Heart right ventricle (tissue), 16 donors: ENCODE measurements at regions of chr3 and their contacts with region 1.

Region 1: GRCh38 chr3:99499235-99500158 is 138.9 kb upstream of the COL8A1 start:
- DNase-seq: peak in 1 of 2 donors; percentile 44
- ATAC-seq: peak; percentile 44 to 78 (median 66)
- H3K4me3 ChIP-seq: no peak overlapping the region
- H3K27ac ChIP-seq: peak overlapping the region in 4 of 10 donors; percentile 15 to 60 (median 33)
- H3K4me1 ChIP-seq: peaks cover 4 to 45% (median 36%) of the 10 kb centered on the region in 9 donors
- H3K27me3 ChIP-seq: no peaks in the 10 kb centered on the region
- CTCF ChIP-seq: peak; percentile 51 to 84 (median 77)

Region 2: DNA sequence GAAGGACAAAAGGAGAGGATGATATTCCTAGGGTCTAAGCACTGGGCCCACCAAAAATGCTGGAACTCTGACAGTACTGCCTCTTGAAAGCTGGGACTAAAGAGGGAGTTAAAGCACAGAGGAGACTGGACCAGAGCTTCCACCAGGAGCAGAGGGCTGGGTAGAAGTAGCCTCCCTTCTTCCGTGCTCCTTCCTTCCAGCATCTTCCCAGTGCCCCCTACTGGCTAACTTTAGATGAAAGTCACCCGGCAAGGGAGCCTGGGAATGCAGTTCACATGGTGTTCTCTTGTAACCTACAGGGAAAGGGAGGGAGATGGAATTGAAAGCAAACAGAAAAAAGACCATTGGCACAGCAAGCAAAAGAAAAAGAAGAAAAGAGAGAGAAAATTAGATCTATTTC is 32.7 kb after region 1 on chr3:
- intact Hi-C with region 1: loop called in 1 of 10 experiments (anchors 1 kb)
- DNase-seq: peak in 1 of 2 donors; percentile 23
- ATAC-seq: peak in 5 of 8 donors; percentile 67 to 77 (median 71)
- H3K4me3 ChIP-seq: no peak overlapping the region
- H3K27ac ChIP-seq: no peak overlapping the region
- H3K4me1 ChIP-seq: peaks cover 0 to 6% (median 0%) of the 10 kb centered on the region in 9 donors
- H3K27me3 ChIP-seq: peaks cover 0 to 3% (median 0%) of the 10 kb centered on the region in 7 donors
- CTCF ChIP-seq: peak in 8 of 9 donors; percentile 42 to 66 (median 54)

Region 3: GRCh38 chr3:99551520-99551919 is 52.0 kb after region 1 on chr3:
- intact Hi-C with region 1: loop called in 2 of 10 experiments (anchors 5 kb)
- DNase-seq: no peak
- ATAC-seq: peak in 6 of 8 donors; percentile 14 to 71 (median 66)
- H3K4me3 ChIP-seq: no peak overlapping the region
- H3K27ac ChIP-seq: peak overlapping the region in 6 of 10 donors; percentile 10 to 77 (median 56)
- H3K4me1 ChIP-seq: peaks cover 0 to 43% (median 16%) of the 10 kb centered on the region in 9 donors
- H3K27me3 ChIP-seq: no peaks in the 10 kb centered on the region
- CTCF ChIP-seq: peak in 1 of 9 donors; percentile 17

Region 4: DNA sequence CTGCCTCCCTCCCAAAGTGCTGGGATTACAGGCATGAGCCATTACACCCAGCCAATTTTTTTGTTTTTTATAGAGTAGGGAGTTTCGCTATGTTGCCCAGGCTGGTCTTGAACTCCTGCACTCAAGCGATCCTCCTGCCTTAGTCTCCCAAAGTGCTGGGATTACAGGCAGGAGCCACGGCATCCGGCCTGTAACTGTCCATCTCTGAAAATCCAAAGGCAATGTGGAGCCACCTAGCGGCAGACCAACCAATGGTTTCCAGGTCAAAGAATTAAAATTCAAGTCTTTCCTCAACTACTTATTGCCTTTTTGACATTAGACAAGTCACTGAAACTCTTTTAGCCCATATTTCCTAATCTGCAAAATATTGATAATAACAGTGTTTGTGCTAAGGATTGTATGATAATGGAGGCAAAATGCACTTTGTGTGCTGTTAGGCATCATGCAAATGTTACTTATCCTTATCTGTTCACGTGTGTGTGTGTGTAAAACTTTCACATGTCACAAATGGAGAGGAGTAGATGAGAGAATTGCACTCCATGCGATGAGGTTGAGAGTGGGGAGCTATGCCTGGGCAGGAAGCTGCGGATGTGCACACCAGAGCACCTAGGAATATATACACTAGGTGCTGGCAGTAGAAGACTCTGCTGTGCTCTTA is 187.6 kb after region 1 on chr3:
- intact Hi-C with region 1: loop called in 7 of 10 experiments (anchors 2 to 10 kb)
- DNase-seq: peak; percentile 43 to 55
- ATAC-seq: peak in 3 of 8 donors; percentile 46 to 54 (median 48)
- H3K4me3 ChIP-seq: no peak overlapping the region
- H3K27ac ChIP-seq: peak overlapping the region in 1 of 10 donors; percentile 23
- H3K4me1 ChIP-seq: peaks cover 0 to 26% (median 0%) of the 10 kb centered on the region in 9 donors
- H3K27me3 ChIP-seq: peaks cover 0 to 3% (median 0%) of the 10 kb centered on the region in 7 donors
- CTCF ChIP-seq: peak; percentile 43 to 76 (median 67)

Region 5: DNA sequence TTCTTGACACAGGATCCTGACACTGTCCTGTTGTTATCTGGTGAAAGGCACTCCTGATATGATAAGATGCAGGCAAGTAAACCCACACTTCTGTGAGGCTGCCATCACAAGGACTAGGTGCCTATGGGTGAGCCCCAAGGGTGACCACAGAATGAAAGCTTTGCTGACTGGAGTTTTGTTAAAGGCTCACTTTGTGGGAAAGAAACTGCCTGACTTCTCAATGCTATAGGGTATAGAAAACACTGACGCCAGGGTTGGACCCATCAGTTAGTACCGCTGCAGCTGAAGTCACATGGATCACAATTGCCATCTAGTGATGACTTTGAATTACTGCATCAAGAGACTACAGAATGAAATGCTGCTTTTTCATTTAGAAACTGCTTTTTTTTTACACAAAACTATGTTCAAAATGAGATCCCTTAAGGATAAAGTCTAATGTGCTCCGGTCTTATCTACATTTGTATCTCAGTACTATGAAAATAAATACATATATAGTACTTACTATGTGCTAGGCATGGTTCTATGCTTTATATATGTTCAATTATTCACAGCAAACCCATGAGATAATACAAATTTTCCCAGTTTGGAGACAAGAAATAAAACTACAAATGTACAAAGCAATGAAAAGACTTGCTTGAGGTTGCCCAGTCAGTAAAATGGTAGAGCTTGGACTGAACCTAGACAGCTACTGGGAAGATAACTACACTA is 253.9 kb after region 1 on chr3:
- intact Hi-C with region 1: loop called in 7 of 10 experiments (anchors 1 to 10 kb)
- DNase-seq: no peak
- ATAC-seq: peak in 6 of 8 donors; percentile 55 to 83 (median 79)
- H3K4me3 ChIP-seq: no peak overlapping the region
- H3K27ac ChIP-seq: no peak overlapping the region
- H3K4me1 ChIP-seq: peaks cover 0 to 19% (median 4%) of the 10 kb centered on the region in 9 donors
- H3K27me3 ChIP-seq: no peaks in the 10 kb centered on the region
- CTCF ChIP-seq: peak; percentile 49 to 85 (median 71)

Region 6: DNA sequence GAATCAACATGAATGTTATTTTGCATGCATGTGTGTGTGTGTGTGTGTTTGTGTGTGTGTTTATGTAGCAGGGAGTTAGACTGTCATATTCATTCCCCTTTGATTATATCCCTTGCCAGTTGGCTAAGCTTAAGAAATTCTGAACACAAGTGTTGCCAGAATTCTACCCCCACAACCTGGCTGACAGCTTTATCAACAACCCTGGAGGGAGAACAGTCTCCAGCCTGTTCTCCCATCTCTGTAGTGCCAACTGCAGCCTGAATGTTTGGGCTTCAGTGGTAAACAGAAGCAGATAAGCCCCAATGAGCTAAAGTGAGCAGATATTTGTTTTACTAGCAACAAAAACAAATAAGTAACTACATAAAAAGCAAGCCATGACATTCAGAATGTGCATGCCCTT is 1656.3 kb after region 1 on chr3:
- intact Hi-C with region 1: no loop called
- DNase-seq: peak in 1 of 2 donors; percentile 45
- ATAC-seq: peak; percentile 86 to 99 (median 96)
- H3K4me3 ChIP-seq: no peak overlapping the region
- H3K27ac ChIP-seq: peak overlapping the region in 2 of 10 donors; percentile 25 to 28
- H3K4me1 ChIP-seq: peaks cover 0 to 21% (median 5%) of the 10 kb centered on the region in 9 donors
- H3K27me3 ChIP-seq: no peaks in the 10 kb centered on the region
- CTCF ChIP-seq: no peak